ENCODE measurements at regions of chr19 and their contacts with region 1.

Region 1: GRCh38 chr19:1490311-1491113 is at the start of gene PCSK4:
- DNase-seq: peak; percentile 96 to 99 (median 98)
- ATAC-seq: peak; percentile 86
- H3K4me3 ChIP-seq: peak within 1 kb of the TSS; percentile 61
- H3K4me3 Mint-ChIP-seq: peak within 1 kb of the TSS; percentile 84
- H3K27ac ChIP-seq: peak within 1 kb of the TSS; percentile 29 to 34
- H3K27ac Mint-ChIP-seq: peak within 1 kb of the TSS; percentile 60
- H3K4me1 ChIP-seq: peaks cover 23% of the 10 kb centered on the region
- H3K4me1 Mint-ChIP-seq: peaks cover 12% of the 10 kb centered on the region
- H3K27me3 ChIP-seq: no peaks in the 10 kb centered on the region
- H3K27me3 Mint-ChIP-seq: no peaks in the 10 kb centered on the region
- CTCF ChIP-seq: no peak
- total RNA-seq, gene PCSK4: 4.2 to 5.2 TPM

Region 2: GRCh38 chr19:1507763-1508509 is 17.4 kb after region 1 on chr19:
- CTCF ChIA-PET with region 1: no interaction called
- POLR2A ChIA-PET with region 1: interaction called, 7 read pairs
- intact Hi-C with region 1: loop called (anchors 1 kb)
- DNase-seq: peak; percentile 86 to 97 (median 92)
- ATAC-seq: peak; percentile 90
- H3K4me3 ChIP-seq: peak overlapping the region; percentile 54
- H3K4me3 Mint-ChIP-seq: peak overlapping the region; percentile 87
- H3K27ac ChIP-seq: peak overlapping the region in 1 of 2 donors; percentile 62
- H3K27ac Mint-ChIP-seq: peak overlapping the region; percentile 87
- H3K4me1 ChIP-seq: peaks cover 44% of the 10 kb centered on the region
- H3K4me1 Mint-ChIP-seq: peaks cover 27% of the 10 kb centered on the region
- H3K27me3 ChIP-seq: peaks cover 10 to 11% of the 10 kb centered on the region in 2 experiments
- H3K27me3 Mint-ChIP-seq: peaks cover 23% of the 10 kb centered on the region
- CTCF ChIP-seq: no peak

Region 3: GRCh38 chr19:1568320-1569019 is 78.0 kb after region 1 on chr19 and contains the start of gene MEX3D:
- CTCF ChIA-PET with region 1: no interaction called
- POLR2A ChIA-PET with region 1: no interaction called
- intact Hi-C with region 1: no loop called
- DNase-seq: peak; percentile 68 to 96 (median 83)
- ATAC-seq: peak; percentile 89
- H3K4me3 ChIP-seq: peak within 1 kb of the TSS; percentile 32
- H3K4me3 Mint-ChIP-seq: peak within 1 kb of the TSS; percentile 45
- H3K27ac ChIP-seq: no peak within 1 kb of the TSS
- H3K27ac Mint-ChIP-seq: no peak within 1 kb of the TSS
- H3K4me1 ChIP-seq: peaks cover 13% of the 10 kb centered on the region
- H3K4me1 Mint-ChIP-seq: peaks cover 4% of the 10 kb centered on the region
- H3K27me3 ChIP-seq: no peaks in the 10 kb centered on the region
- H3K27me3 Mint-ChIP-seq: peaks cover 4% of the 10 kb centered on the region
- CTCF ChIP-seq: no peak
- total RNA-seq, gene MEX3D: 1.6 to 2.3 TPM

Region 4: GRCh38 chr19:1837625-1838105 is 347.2 kb after region 1 on chr19:
- CTCF ChIA-PET with region 1: no interaction called
- POLR2A ChIA-PET with region 1: no interaction called
- intact Hi-C with region 1: no loop called
- DNase-seq: peak; percentile 33 to 72 (median 54)
- ATAC-seq: peak; percentile 85
- H3K4me3 ChIP-seq: no peak overlapping the region
- H3K4me3 Mint-ChIP-seq: no peak overlapping the region
- H3K27ac ChIP-seq: no peak overlapping the region
- H3K27ac Mint-ChIP-seq: no peak overlapping the region
- H3K4me1 ChIP-seq: peaks cover 59% of the 10 kb centered on the region
- H3K4me1 Mint-ChIP-seq: peaks cover 20% of the 10 kb centered on the region
- H3K27me3 ChIP-seq: no peaks in the 10 kb centered on the region
- H3K27me3 Mint-ChIP-seq: no peaks in the 10 kb centered on the region
- CTCF ChIP-seq: peak; percentile 81